Activated CD4-positive, alpha-beta memory T cell treated with anti-CD3 and anti-CD28 coated beads, Interleukin-2, amount 10 ng/mL, durations not matched to agents 7 days and 5 days (primary cell): ENCODE measurements at regions of chr11 and their contacts with region 1.

Region 1: GRCh38 chr11:122754553-122755322 is 83.6 kb upstream of the CRTAM start:
- DNase-seq: peak; percentile 38
- H3K4me3 Mint-ChIP-seq: no peak overlapping the region
- H3K27ac Mint-ChIP-seq: no peak overlapping the region
- H3K4me1 Mint-ChIP-seq: peaks cover 49% of the 10 kb centered on the region
- H3K27me3 Mint-ChIP-seq: peaks cover 3% of the 10 kb centered on the region

Region 2: DNA sequence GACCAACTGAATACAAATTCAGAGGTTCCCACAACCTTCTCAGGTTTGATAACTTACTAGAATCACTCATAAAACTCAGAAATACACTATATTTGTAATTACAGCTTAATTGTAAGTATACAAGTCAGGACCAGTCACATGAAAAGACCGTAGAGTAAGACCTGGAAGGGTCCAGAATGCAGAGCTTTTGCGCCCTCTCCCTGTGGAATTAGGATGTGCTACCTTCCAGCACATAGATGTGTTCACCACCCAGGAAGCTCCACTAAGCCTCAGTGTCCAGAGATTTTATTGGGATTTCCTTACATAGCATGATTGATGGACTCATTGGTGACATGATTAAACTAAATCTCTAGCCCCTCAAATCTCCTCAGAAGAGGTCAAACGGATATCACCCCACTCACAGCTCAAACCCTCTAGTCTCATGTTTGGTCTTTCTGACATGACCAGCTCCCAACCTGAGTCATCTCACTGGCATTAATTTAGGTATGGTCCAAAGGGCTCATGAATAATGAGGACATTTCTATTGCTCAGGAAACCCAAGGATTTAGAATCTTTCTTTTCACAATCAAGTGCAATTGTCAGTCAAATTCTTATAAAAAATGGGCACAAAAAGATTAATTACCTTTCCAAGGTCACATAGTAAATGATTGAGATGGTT is 176.4 kb before region 1 on chr11:
- CTCF ChIA-PET with region 1: interaction called, 17 read pairs
- POLR2A ChIA-PET with region 1: no interaction called
- DNase-seq: no peak
- H3K4me3 Mint-ChIP-seq: no peak overlapping the region
- H3K27ac Mint-ChIP-seq: no peak overlapping the region
- H3K4me1 Mint-ChIP-seq: peaks cover 5% of the 10 kb centered on the region
- H3K27me3 Mint-ChIP-seq: peaks cover 16% of the 10 kb centered on the region

Region 3: GRCh38 chr11:122655527-122656072 is 99.1 kb before region 1 on chr11 and contains the start of gene UBASH3B:
- CTCF ChIA-PET with region 1: interaction called, 179 read pairs
- POLR2A ChIA-PET with region 1: interaction called, 26 read pairs
- DNase-seq: peak; percentile 68
- H3K4me3 Mint-ChIP-seq: peak within 1 kb of the TSS; percentile 90
- H3K27ac Mint-ChIP-seq: peak within 1 kb of the TSS; percentile 70
- H3K4me1 Mint-ChIP-seq: peaks cover 21% of the 10 kb centered on the region
- H3K27me3 Mint-ChIP-seq: peaks cover 32% of the 10 kb centered on the region
- total RNA-seq, gene UBASH3B: 18.4 to 20.9 TPM

Region 4: GRCh38 chr11:122673701-122674100 is 81.0 kb before region 1 on chr11:
- CTCF ChIA-PET with region 1: interaction called, 36 read pairs
- POLR2A ChIA-PET with region 1: interaction called, 5 read pairs
- DNase-seq: no peak
- H3K4me3 Mint-ChIP-seq: no peak overlapping the region
- H3K27ac Mint-ChIP-seq: no peak overlapping the region
- H3K4me1 Mint-ChIP-seq: peaks cover 31% of the 10 kb centered on the region
- H3K27me3 Mint-ChIP-seq: peaks cover 8% of the 10 kb centered on the region

Region 5: DNA sequence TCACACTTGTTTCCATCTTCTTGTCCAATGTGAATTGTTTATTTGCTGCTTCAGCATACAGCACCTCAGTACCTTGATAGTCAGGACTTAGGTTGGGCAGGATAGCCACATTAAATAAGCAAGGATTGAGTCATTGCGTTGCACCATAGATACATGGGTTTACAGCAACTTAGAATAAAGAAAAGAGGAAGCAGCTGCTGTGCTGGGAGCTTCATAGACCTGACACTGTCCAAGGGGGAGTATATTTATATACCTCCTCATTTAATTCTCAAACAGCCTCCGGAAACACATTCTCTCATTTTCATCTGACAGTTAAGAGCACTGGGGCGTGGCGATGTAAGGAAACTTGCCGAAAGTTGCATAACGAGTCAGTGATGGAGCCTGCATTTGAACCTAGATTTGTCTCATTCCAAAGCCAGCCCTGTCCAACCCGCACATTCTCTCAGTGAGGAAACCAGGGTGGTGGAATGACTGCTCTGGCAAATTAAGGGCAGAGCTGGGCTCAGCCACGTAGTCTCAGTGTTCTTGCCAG is 57.0 kb before region 1 on chr11:
- CTCF ChIA-PET with region 1: interaction called, 32 read pairs
- POLR2A ChIA-PET with region 1: interaction called, 25 read pairs
- DNase-seq: peak; percentile 48
- H3K4me3 Mint-ChIP-seq: peak overlapping the region; percentile 46
- H3K27ac Mint-ChIP-seq: peak overlapping the region; percentile 92
- H3K4me1 Mint-ChIP-seq: peaks cover 52% of the 10 kb centered on the region
- H3K27me3 Mint-ChIP-seq: no peaks in the 10 kb centered on the region

Region 6: GRCh38 chr11:122743949-122744348 is 10.8 kb before region 1 on chr11:
- CTCF ChIA-PET with region 1: interaction called, 22 read pairs
- POLR2A ChIA-PET with region 1: interaction called, 9 read pairs
- DNase-seq: peak; percentile 82
- H3K4me3 Mint-ChIP-seq: no peak overlapping the region
- H3K27ac Mint-ChIP-seq: no peak overlapping the region
- H3K4me1 Mint-ChIP-seq: peaks cover 1% of the 10 kb centered on the region
- H3K27me3 Mint-ChIP-seq: peaks cover 3% of the 10 kb centered on the region

Region 7: GRCh38 chr11:122781378-122782195 is 26.8 kb after region 1 on chr11:
- CTCF ChIA-PET with region 1: interaction called, 54 read pairs
- POLR2A ChIA-PET with region 1: no interaction called
- DNase-seq: peak; percentile 74
- H3K4me3 Mint-ChIP-seq: no peak overlapping the region
- H3K27ac Mint-ChIP-seq: no peak overlapping the region
- H3K4me1 Mint-ChIP-seq: peaks cover 4% of the 10 kb centered on the region
- H3K27me3 Mint-ChIP-seq: no peaks in the 10 kb centered on the region

Region 8: DNA sequence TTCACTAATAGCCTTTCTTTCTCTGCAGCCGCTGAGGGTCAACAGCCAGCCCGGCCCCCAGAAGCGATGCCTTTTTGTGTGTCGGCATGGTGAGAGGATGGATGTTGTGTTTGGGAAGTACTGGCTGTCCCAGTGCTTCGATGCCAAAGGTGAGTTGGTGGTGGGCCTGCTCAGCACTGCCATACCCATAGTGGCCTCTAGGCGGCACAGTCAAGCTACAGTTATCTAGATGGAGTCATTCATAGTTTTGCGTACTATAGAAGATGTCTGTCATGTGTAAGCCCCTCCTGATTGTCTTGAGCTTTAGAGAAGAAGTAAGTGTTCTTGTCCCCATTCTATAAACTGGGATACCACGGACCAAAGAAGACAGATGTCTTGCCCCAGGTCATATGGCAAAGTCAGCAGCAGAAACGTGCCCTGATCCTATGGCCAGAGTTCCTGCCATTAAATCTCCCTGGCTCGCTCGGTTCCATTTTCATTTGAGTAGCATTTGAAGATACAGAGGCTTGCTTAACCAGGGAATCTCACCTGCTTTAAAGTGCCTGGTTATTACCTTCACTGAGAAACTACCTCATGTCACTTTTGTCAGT is 41.5 kb after region 1 on chr11:
- CTCF ChIA-PET with region 1: no interaction called
- POLR2A ChIA-PET with region 1: no interaction called
- DNase-seq: peak; percentile 58
- H3K4me3 Mint-ChIP-seq: no peak overlapping the region
- H3K27ac Mint-ChIP-seq: no peak overlapping the region
- H3K4me1 Mint-ChIP-seq: no peaks in the 10 kb centered on the region
- H3K27me3 Mint-ChIP-seq: no peaks in the 10 kb centered on the region